HCT116 (cell line): ENCODE measurements at regions of chr11 and their contacts with region 1.

Region 1: DNA sequence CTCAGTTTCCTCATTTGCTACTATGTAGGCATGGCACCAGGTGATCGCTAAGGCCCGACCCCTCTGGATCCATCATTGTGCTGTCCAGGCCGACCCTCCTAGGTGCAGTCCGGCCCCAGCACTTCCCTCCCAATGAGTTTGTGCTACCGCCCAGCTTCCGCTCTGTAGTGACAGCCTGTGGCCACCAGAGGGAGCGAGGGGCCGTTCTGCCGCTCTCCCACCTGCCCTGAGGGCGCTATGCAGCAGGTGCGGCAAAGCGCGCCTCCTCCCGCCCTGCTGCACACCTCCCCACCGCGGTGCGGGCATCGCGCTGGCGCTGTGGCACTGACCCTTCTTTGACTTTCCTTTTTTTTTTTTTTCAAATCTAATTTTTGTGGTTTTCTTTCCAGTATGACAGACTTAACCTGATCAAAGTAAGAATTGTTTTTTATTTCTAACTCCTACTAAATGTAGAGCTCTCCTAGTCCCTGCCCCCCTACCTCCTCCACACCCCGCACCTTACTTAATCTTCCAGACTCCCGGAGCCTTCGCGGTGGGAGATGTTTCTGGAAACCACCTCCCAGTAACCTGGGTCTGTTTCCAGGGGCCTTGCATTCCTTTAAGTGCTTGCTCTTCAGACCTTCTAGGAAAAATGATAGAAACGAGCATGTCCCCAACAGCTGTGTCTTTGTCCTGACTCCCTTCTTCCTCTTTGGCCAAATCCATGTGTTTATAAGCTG is 73.7 kb downstream of the SCN3B start:
- DNase-seq: peak; percentile 41
- ATAC-seq: peak; percentile 91
- H3K4me3 ChIP-seq: no peak overlapping the region
- H3K27ac ChIP-seq: no peak overlapping the region
- H3K4me1 ChIP-seq: peaks cover 2 to 11% of the 10 kb centered on the region in 2 experiments; a peak in 3 of 4 replicates
- H3K27me3 ChIP-seq: peaks cover 12% of the 10 kb centered on the region
- CTCF ChIP-seq: peak; percentile 91 to 98 (median 97)
- POLR2A ChIP-seq: no peak
- RAD21 ChIP-seq: peak; percentile 86

Region 2: GRCh38 chr11:123110356-123110755 is 470.4 kb before region 1 on chr11:
- CTCF ChIA-PET with region 1: no interaction called
- POLR2A ChIA-PET with region 1: no interaction called
- RAD21 ChIA-PET with region 1: no interaction called
- intact Hi-C with region 1: no loop called
- DNase-seq: no peak
- ATAC-seq: no peak
- H3K4me3 ChIP-seq: no peak overlapping the region
- H3K27ac ChIP-seq: no peak overlapping the region
- H3K4me1 ChIP-seq: peaks cover 0 to 3% of the 10 kb centered on the region in 2 experiments; a peak in 2 of 4 replicates
- H3K27me3 ChIP-seq: no peaks in the 10 kb centered on the region
- CTCF ChIP-seq: no peak
- POLR2A ChIP-seq: no peak
- RAD21 ChIP-seq: no peak

Region 3: DNA sequence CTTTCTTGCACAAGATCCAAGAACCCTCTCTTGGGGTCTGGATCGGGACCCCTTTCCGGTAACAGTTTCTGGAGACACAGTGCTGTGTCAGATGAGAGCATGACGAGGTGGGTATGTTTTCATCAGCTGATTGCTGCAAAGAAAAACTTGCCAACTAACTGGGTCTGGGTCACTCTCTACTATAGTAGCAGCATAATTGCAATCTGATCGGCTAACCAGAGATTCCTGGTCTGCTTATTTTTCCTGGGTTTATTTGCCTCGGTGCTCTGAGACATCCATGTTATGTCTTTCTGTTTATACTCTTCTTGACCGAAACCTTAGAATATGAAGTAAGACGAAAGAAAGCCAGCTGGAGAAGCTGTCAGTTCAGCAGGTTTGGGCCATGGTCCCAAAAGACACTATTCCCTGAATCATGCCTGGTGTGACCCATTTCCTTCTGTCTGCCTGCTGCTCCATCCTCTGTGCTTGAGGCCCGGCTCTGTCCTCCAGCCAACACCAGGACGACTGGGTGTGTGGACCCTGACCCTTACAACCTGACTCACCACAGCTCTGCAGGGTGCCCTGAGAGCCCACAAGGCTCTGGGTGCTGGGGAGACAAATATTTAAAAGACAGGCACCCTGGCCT is 361.5 kb before region 1 on chr11:
- CTCF ChIA-PET with region 1: no interaction called
- POLR2A ChIA-PET with region 1: no interaction called
- RAD21 ChIA-PET with region 1: no interaction called
- intact Hi-C with region 1: no loop called
- DNase-seq: no peak
- ATAC-seq: peak; percentile 63
- H3K4me3 ChIP-seq: no peak overlapping the region
- H3K27ac ChIP-seq: no peak overlapping the region
- H3K4me1 ChIP-seq: peaks cover 4 to 25% of the 10 kb centered on the region in 2 experiments
- H3K27me3 ChIP-seq: no peaks in the 10 kb centered on the region
- CTCF ChIP-seq: no peak
- POLR2A ChIP-seq: no peak
- RAD21 ChIP-seq: no peak

Region 4: GRCh38 chr11:123301696-123302400 is 278.9 kb before region 1 on chr11:
- CTCF ChIA-PET with region 1: no interaction called
- POLR2A ChIA-PET with region 1: no interaction called
- RAD21 ChIA-PET with region 1: no interaction called
- intact Hi-C with region 1: loop called (anchors 10 kb)
- DNase-seq: peak; percentile 18
- ATAC-seq: peak; percentile 95
- H3K4me3 ChIP-seq: peak overlapping the region; percentile 9 to 14; a peak in 3 of 4 replicates
- H3K27ac ChIP-seq: no peak overlapping the region
- H3K4me1 ChIP-seq: peaks cover 2 to 15% of the 10 kb centered on the region in 2 experiments; a peak in 2 of 4 replicates
- H3K27me3 ChIP-seq: no peaks in the 10 kb centered on the region
- CTCF ChIP-seq: peak; percentile 53 to 89 (median 76); a peak in 5 of 6 replicates
- POLR2A ChIP-seq: no peak
- RAD21 ChIP-seq: peak; percentile 76

Region 5: DNA sequence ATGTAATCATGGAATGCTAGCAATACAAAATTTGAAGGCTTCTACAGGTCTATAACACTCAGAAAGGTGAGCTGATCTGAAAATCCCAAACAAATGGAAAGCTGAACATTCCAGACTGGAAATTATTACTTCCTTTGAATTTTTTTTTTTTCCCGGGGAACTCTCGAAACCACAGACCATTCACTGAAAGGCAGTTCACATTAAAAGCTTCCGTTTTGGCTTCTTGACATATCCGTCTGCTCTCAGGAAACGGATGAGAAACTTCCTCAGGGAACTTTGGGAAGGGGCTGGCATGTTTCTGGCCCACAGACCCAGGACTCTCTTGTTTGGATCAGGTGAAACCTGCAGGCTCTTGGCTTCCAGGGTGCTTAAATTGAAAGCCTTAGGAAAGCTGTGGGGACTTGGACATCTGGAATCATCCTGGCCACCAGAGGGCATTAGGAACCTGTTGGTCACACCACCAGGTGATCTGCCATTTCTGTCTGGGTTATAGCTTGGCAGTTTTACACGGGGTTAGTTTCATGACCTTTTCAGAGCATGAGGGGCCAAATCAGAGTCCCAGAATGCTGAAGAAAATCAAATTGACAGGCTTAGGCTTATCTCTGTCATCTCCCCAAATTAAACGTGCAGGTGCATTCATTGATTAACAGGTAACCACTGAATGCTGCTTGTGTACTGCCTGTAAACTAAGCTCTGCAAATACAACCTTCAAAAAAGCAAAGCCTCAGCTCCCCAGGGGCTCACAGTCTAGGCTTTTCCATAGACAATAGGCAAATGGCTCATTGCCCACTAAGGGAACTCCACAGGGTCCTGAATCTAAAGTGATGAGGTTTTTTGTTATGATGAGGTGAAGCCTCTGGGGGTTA is 173.4 kb before region 1 on chr11:
- CTCF ChIA-PET with region 1: interaction called, 14 read pairs
- POLR2A ChIA-PET with region 1: no interaction called
- RAD21 ChIA-PET with region 1: interaction called in 1 of 2 experiments, 3 read pairs
- intact Hi-C with region 1: loop called (anchors 2 kb)
- DNase-seq: peak; percentile 74
- ATAC-seq: peak; percentile 97
- H3K4me3 ChIP-seq: no peak overlapping the region
- H3K27ac ChIP-seq: no peak overlapping the region
- H3K4me1 ChIP-seq: no peaks in the 10 kb centered on the region
- H3K27me3 ChIP-seq: 0 out of 2 replicates have a peak, but pooled peaks cover 9% of the 10 kb centered on the region
- CTCF ChIP-seq: peak; percentile 85 to 95 (median 88)
- POLR2A ChIP-seq: no peak
- RAD21 ChIP-seq: peak; percentile 95

Region 6: GRCh38 chr11:123511037-123511870 is 69.5 kb before region 1 on chr11:
- CTCF ChIA-PET with region 1: interaction called, 4 read pairs
- POLR2A ChIA-PET with region 1: no interaction called
- RAD21 ChIA-PET with region 1: no interaction called
- intact Hi-C with region 1: loop called (anchors 1 kb)
- DNase-seq: peak; percentile 74
- ATAC-seq: peak; percentile 100
- H3K4me3 ChIP-seq: no peak overlapping the region
- H3K27ac ChIP-seq: no peak overlapping the region
- H3K4me1 ChIP-seq: peaks cover 5 to 6% of the 10 kb centered on the region in 2 experiments; a peak in 3 of 4 replicates
- H3K27me3 ChIP-seq: no peaks in the 10 kb centered on the region; the same call in 1 of the 2 replicates
- CTCF ChIP-seq: peak; percentile 82 to 95 (median 89)
- POLR2A ChIP-seq: no peak
- RAD21 ChIP-seq: peak; percentile 88

Region 7: GRCh38 chr11:123640677-123641494 is 60.2 kb after region 1 on chr11:
- CTCF ChIA-PET with region 1: interaction called, 4 read pairs
- POLR2A ChIA-PET with region 1: no interaction called
- RAD21 ChIA-PET with region 1: interaction called in 1 of 2 experiments, 4 read pairs
- intact Hi-C with region 1: loop called (anchors 5 kb)
- DNase-seq: no peak
- ATAC-seq: peak; percentile 98
- H3K4me3 ChIP-seq: no peak overlapping the region
- H3K27ac ChIP-seq: no peak overlapping the region
- H3K4me1 ChIP-seq: peaks cover 0 to 5% of the 10 kb centered on the region in 2 experiments; a peak in 1 of 4 replicates
- H3K27me3 ChIP-seq: peaks cover 25% of the 10 kb centered on the region
- CTCF ChIP-seq: peak; percentile 79 to 92 (median 89); a peak in 5 of 6 replicates
- POLR2A ChIP-seq: no peak
- RAD21 ChIP-seq: peak; percentile 89